ENCODE measurements at regions of chr10 and their contacts with region 1.

Region 1: DNA sequence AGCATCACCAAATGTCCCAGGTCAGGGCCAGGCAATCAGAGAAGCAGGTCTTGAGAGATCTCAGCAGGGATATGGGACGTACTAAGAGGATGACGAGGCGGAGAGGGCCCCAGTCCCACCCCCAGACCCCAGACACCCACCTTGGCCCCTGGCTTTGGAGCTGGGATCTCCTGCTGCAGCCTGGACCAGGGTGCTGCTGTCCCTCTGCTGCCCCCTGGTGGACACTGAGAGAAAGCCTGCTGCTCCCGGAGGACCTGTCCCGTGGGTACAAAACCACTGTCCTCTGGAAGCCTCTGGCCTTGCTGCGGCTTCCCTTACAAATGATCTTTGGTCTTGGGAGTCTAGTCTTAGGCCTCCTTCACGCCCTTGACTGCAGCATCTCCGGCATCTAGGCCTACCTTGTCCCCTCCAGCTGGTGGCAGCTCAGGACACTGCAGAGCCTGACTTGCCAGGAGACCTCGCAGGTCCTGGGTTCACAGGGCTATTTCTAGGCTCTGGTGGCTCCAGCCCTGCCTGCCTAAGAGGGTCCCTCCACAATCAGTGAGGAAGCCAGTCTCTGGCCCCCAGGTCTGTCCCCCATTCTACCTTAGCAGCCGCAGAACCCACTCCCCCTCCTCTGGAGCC is 97.1 kb downstream of the RGS10 start:
- DNase-seq: peak; percentile 95

Region 2: DNA sequence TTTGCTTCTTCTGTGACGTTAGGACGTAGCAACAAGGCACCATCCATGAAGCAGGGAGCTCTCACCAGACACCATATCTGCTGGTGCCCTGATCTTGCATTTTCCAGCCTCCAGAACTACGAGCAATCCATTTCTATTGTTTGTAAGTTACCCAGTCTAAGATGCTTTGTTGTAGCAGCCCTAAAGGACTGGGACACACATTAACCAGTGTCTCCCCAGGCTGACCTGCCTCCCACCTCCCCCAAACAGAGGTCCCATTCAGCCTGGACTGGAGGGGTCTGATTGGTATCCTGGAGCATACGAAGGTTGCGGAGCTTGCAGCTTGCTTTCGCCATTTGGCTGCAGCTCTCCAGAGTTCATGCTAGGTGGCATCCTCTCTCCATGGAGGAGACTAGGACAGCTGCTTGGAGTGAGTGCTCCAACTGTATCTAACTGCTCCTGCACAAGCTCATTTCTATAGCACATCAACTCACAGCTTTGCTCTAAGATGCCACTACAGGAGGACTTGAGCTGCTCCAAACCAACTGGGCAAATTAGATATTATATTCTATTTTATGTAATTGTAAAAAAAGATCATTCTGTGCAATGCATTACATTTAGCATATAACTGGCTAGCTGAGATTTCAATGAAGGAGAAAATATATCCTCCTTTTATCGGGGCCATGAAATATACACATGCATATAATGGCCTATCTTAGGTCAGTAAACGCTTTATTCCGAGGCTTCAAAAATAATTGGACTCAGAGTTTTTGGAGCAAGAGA is 246.0 kb before region 1 on chr10:
- intact Hi-C with region 1: loop called (anchors 2 kb)
- DNase-seq: peak; percentile 80

Measured in posterior vena cava (tissue), 2 donors.